Activated CD4-positive, alpha-beta memory T cell treated with anti-CD3 and anti-CD28 coated beads, Interleukin-2, amount 10 ng/mL, durations not matched to agents 7 days and 5 days (primary cell): ENCODE measurements at regions of chr4 and their contacts with region 1.

Region 1: DNA sequence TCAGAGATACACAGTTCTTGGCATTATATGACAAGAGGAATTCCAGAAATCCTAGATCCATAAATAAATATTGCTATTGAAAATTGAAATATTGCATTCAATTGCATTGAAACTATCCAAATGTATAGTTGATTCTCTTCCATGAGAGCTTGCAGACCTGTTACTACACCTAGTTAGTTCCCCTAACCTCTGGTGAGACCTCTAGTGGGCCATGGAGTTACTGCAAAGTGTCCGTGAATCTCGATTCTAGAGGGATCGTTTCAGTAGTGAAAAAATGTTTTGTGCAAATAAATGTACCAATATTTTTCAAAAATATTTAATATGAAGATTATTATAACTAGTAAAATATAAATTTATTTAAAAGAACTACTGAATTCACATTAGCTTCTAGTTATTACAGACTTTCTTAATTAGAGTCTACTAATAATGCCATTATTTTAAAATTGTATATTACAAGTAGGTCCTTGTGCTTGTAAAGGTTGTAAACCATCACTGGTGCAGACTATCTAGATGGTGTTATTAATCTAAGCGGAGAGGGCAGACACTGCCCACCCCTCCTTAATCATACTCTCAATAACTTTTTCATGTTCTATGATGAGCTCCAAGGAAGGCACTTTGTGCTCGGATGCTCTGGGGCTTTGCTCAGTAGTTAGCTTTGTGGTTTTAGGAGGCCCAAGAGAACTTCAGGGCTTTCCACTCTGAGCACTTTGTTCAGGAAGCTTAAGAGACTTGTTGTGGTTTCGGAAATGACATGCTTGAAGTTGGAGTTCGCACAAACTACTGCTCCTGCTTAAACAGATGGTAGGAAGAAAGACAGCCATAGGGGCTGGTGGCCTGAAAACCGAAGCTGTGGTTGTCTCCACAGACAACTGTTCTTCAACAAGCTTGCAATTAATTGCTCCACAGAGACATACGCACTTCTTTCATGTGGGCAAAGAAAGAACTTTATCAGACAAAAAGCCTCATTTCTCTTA is 42.8 kb downstream of the IL21 start:
- DNase-seq: peak; percentile 68
- H3K4me3 Mint-ChIP-seq: peak overlapping the region; percentile 48
- H3K27ac Mint-ChIP-seq: peak overlapping the region; percentile 80
- H3K4me1 Mint-ChIP-seq: peaks cover 36% of the 10 kb centered on the region
- H3K27me3 Mint-ChIP-seq: no peaks in the 10 kb centered on the region

Region 2: DNA sequence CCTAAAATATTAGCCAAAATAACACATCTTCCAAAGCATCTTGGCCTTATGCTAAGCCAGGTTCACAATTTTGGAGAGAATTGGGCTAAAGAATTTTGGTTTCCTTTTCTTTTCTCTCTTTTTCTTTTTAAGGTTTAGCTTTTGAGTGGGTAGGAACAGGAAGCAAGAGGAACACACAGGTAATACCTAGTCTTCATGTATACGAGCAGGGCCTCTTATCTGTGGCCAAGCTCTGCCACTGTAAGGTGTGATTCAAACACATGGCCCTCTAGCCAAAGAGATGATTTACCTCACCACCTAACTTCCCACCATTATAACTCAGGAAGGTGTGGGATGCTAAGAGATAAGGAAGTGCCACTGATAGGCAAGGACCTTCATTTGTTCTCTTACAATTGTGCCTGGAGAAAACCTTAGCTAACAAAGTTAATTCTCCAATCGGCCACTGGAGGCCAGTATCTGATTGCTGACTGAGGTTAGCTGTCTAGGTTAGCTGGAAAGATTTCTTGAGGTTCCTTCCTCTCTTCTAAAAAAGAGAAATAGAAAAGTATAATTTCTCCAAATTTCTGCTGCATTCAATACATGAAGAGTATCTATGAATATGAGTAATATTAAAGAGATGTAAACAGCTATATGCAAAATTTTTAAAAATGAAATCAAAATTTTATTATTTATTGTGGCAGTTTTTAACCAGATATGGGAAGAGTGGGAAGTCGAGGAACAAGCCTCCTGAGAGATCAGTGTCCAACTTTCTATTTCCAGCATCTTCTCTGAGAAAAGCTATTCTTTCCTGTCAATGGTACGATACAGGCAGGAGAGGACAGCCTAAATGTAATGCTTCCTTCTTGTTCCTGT is 677.7 kb before region 1 on chr4:
- CTCF ChIA-PET with region 1: interaction called, 36 read pairs
- POLR2A ChIA-PET with region 1: interaction called, 4 read pairs
- DNase-seq: peak; percentile 56
- H3K4me3 Mint-ChIP-seq: no peak overlapping the region
- H3K27ac Mint-ChIP-seq: no peak overlapping the region
- H3K4me1 Mint-ChIP-seq: peaks cover 4% of the 10 kb centered on the region
- H3K27me3 Mint-ChIP-seq: no peaks in the 10 kb centered on the region

Region 3: GRCh38 chr4:121950212-121950679 is 627.8 kb before region 1 on chr4:
- CTCF ChIA-PET with region 1: interaction called, 33 read pairs
- POLR2A ChIA-PET with region 1: interaction called, 4 read pairs
- DNase-seq: peak; percentile 85
- H3K4me3 Mint-ChIP-seq: peak overlapping the region; percentile 82
- H3K27ac Mint-ChIP-seq: no peak overlapping the region
- H3K4me1 Mint-ChIP-seq: peaks cover 15% of the 10 kb centered on the region
- H3K27me3 Mint-ChIP-seq: peaks cover 48% of the 10 kb centered on the region

Region 4: DNA sequence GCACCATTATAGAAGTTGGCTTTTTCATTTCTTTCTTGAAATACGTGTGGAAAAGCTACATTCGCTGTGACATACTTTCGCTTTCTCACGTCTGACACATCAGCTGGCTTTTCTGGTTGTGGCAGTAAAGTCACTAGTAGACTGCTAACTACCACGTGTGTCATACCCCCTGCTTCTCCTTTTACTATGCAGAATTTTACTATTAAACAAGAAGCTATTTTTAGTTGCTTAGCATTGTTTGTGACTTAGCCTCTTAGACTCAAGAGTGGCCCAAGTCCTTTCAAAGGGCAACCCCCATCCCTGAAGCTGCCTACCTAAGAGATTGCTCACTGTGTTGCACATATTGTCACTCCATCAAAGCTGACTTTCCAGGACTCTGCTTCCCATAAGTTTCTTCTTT is 119.5 kb before region 1 on chr4:
- CTCF ChIA-PET with region 1: interaction called, 21 read pairs
- POLR2A ChIA-PET with region 1: interaction called, 3 read pairs
- DNase-seq: peak; percentile 61
- H3K4me3 Mint-ChIP-seq: peak overlapping the region; percentile 69
- H3K27ac Mint-ChIP-seq: peak overlapping the region; percentile 67
- H3K4me1 Mint-ChIP-seq: peaks cover 45% of the 10 kb centered on the region
- H3K27me3 Mint-ChIP-seq: no peaks in the 10 kb centered on the region

Region 5: DNA sequence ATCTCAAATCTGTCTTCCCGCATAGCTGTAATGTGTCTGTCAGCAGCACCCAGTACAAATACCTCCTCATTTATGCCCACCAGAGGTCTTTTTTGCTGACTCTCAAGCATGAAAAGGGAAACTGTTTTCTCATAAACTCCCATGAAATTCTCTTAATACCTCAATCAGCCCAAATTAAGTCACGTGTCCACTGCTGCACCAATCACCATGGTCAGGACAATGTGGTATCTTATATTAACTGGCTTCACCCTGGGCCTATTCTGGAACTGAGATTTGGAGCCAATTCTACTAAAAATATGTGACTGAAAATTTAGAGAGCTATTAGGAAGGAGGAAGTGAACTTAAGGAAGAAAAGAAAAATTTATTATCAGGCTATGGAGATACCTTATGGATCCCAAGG is 15.6 kb before region 1 on chr4:
- CTCF ChIA-PET with region 1: interaction called, 11 read pairs
- POLR2A ChIA-PET with region 1: no interaction called
- DNase-seq: no peak
- H3K4me3 Mint-ChIP-seq: no peak overlapping the region
- H3K27ac Mint-ChIP-seq: no peak overlapping the region
- H3K4me1 Mint-ChIP-seq: peaks cover 3% of the 10 kb centered on the region
- H3K27me3 Mint-ChIP-seq: no peaks in the 10 kb centered on the region

Region 6: DNA sequence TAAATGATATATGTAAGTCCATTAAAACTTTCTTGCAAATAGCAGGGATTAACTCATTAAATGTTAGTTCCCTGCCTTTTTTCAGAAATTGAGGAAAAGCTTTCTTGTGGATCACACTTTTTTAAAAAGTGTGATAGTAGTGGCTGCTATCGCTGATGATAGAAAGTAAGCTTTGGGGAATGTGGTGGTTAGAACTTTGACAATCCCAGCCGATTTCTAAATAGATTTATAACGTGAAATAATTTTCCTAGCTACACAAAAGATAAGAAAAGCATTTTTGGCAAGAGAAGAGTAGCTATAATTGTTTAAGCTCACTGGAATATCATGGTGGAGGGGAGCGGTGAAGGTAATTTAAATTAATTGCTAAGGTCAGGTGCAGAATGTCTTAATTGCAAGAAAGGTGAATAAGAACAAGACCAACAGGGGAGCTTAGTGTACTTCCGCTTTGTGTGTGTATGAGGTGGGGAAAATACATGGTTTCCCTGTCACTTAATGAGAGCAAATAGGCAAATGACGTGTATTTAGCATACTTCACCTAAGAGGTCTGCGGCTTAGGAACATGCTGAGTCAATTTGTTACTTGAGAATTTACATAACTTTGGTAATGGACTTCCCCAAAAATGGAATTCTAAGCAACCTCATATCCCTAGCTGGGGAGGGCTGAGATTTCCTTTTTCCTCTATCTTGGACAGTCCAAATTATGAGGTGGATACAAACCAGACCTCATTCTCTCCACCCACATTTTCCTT is 54.5 kb after region 1 on chr4:
- CTCF ChIA-PET with region 1: no interaction called
- POLR2A ChIA-PET with region 1: no interaction called
- DNase-seq: no peak
- H3K4me3 Mint-ChIP-seq: no peak overlapping the region
- H3K27ac Mint-ChIP-seq: no peak overlapping the region
- H3K4me1 Mint-ChIP-seq: peaks cover 39% of the 10 kb centered on the region
- H3K27me3 Mint-ChIP-seq: no peaks in the 10 kb centered on the region

Region 7: DNA sequence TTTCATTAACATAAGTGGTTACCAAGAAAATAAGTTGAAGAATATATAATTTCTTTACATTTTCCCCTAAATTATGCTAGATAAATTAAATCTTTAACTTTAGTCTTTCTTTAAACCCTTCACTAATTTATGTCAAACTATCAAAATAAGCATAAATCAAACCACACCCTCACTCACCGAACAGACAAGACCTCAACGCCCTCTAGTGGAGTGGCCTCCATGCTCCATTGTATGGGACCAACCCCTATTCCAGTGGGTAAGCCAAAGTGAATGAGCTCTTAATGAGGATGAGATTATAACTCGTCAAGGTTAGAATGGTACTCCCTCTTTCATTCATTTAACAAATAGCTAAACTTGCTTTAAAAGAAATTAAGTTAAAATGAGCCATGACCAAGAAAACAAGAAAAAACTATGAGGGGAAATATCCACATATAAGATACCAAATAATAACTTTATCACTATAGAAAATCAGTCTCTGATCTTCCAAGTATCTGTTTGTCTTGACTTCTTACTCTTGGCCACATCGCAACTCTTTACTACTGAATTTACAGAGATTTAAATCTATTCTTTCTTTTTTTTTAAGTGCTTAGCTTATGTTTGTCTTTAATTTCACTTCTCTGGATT is 138.8 kb after region 1 on chr4:
- CTCF ChIA-PET with region 1: interaction called, 15 read pairs
- POLR2A ChIA-PET with region 1: no interaction called
- DNase-seq: peak; percentile 77
- H3K4me3 Mint-ChIP-seq: no peak overlapping the region
- H3K27ac Mint-ChIP-seq: no peak overlapping the region
- H3K4me1 Mint-ChIP-seq: peaks cover 29% of the 10 kb centered on the region
- H3K27me3 Mint-ChIP-seq: no peaks in the 10 kb centered on the region

Region 8: DNA sequence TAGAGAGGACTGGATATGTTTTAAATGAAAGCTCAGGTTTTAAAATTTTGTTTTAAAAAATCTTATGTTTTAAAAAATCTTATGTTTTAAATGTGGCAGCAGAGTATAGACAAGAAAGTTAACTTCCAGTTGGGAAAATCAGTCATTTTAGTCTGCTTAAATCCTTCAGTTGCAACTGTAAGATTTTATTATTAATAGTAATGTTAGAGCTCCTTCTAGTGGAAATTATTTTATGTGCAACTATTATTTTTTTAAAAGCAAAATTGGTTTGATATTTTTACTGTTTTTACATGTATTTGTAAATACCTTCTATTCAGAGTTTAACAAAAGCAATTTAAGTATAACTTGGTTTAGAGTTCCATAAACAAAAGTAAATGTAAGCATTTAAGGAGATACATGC is 352.8 kb after region 1 on chr4:
- CTCF ChIA-PET with region 1: interaction called, 14 read pairs
- POLR2A ChIA-PET with region 1: interaction called, 3 read pairs
- DNase-seq: no peak
- H3K4me3 Mint-ChIP-seq: no peak overlapping the region
- H3K27ac Mint-ChIP-seq: no peak overlapping the region
- H3K4me1 Mint-ChIP-seq: peaks cover 48% of the 10 kb centered on the region
- H3K27me3 Mint-ChIP-seq: no peaks in the 10 kb centered on the region